HCT116 (cell line): ENCODE measurements at regions of chr6 and their contacts with region 1.

Region 1: GRCh38 chr6:144285798-144286502 is 815 bp downstream of the UTRN start:
- DNase-seq: no peak
- ATAC-seq: peak; percentile 52
- H3K4me3 ChIP-seq: peak overlapping the region; percentile 79 to 89
- H3K27ac ChIP-seq: peak overlapping the region; percentile 65
- H3K4me1 ChIP-seq: peaks cover 14 to 16% of the 10 kb centered on the region in 2 experiments
- H3K27me3 ChIP-seq: no peaks in the 10 kb centered on the region
- CTCF ChIP-seq: no peak
- POLR2A ChIP-seq: no peak
- RAD21 ChIP-seq: no peak

Region 2: DNA sequence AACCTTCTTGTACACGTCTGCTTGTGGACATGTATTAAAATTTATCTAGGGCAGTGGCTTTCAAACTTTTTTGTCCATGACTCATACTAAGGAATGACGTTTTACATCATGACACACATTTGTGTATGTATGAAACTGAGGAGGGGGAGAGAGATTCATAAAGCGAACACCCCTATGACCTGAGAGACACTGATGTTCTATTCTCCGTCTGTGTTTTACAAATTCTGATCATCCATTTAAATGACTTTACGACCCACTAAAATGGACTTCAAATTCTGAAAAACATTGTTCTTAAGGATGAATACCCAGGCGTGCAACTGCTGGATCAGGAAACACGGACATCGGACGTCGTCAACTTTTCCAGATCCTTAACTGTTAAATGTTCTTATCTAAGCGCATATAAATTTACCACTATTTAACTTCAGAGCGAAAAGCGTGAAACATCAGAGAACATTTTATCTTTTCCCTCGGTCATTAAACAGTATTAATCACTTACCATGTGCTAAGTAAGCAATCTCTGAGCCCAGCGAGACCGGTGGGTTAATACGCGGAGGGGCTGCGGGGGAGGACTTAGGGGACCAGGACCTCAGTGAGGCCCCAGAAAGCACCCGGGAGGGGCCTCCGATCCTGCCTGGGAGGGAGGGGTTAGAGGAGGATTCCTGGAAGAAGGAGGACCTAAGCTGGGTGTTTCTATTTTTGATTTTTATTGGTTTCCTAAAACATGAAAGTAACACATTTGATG is 279.0 kb before region 1 on chr6:
- CTCF ChIA-PET with region 1: no interaction called
- POLR2A ChIA-PET with region 1: no interaction called
- RAD21 ChIA-PET with region 1: no interaction called
- intact Hi-C with region 1: no loop called
- DNase-seq: peak; percentile 16
- ATAC-seq: no peak
- H3K4me3 ChIP-seq: peak overlapping the region; percentile 56 to 74
- H3K27ac ChIP-seq: peak overlapping the region; percentile 71
- H3K4me1 ChIP-seq: peaks cover 3 to 7% of the 10 kb centered on the region in 2 experiments; a peak in 2 of 4 replicates
- H3K27me3 ChIP-seq: no peaks in the 10 kb centered on the region
- CTCF ChIP-seq: no peak
- POLR2A ChIP-seq: no peak
- RAD21 ChIP-seq: no peak

Region 3: DNA sequence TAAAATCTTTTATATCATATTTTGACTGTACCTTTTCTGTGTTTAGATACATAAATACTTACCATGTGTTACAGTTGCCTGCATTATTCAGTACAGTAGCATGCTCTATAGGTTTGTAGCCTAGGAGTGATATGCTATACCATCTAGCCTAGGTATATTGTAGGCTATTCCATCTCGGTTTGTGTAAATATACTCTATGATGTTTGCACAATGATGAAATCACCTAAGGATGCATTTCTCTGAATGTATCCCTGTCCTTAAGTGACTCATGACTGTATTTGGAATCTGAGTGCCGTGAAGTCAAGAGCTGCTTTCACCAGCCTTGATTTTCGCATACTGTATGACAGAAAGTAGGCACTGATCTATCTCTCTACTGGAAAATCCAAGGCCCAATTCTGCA is 129.1 kb after region 1 on chr6:
- CTCF ChIA-PET with region 1: no interaction called
- POLR2A ChIA-PET with region 1: no interaction called
- RAD21 ChIA-PET with region 1: no interaction called
- intact Hi-C with region 1: no loop called
- DNase-seq: no peak
- ATAC-seq: no peak
- H3K4me3 ChIP-seq: no peak overlapping the region
- H3K27ac ChIP-seq: no peak overlapping the region
- H3K4me1 ChIP-seq: peaks cover 0 to 10% of the 10 kb centered on the region in 2 experiments; a peak in 1 of 4 replicates
- H3K27me3 ChIP-seq: no peaks in the 10 kb centered on the region
- CTCF ChIP-seq: no peak
- POLR2A ChIP-seq: no peak
- RAD21 ChIP-seq: no peak

Region 4: GRCh38 chr6:144482142-144482541 is 196.2 kb after region 1 on chr6:
- CTCF ChIA-PET with region 1: interaction called, 5 read pairs
- POLR2A ChIA-PET with region 1: no interaction called
- RAD21 ChIA-PET with region 1: no interaction called
- intact Hi-C with region 1: loop called (anchors 1 kb)
- DNase-seq: peak; percentile 60
- ATAC-seq: peak; percentile 87
- H3K4me3 ChIP-seq: no peak overlapping the region
- H3K27ac ChIP-seq: no peak overlapping the region
- H3K4me1 ChIP-seq: no peaks in the 10 kb centered on the region
- H3K27me3 ChIP-seq: no peaks in the 10 kb centered on the region
- CTCF ChIP-seq: peak; percentile 62 to 75 (median 70)
- POLR2A ChIP-seq: no peak
- RAD21 ChIP-seq: peak; percentile 86